ENCODE measurements at regions of chr2 and their contacts with region 1.

Region 1: DNA sequence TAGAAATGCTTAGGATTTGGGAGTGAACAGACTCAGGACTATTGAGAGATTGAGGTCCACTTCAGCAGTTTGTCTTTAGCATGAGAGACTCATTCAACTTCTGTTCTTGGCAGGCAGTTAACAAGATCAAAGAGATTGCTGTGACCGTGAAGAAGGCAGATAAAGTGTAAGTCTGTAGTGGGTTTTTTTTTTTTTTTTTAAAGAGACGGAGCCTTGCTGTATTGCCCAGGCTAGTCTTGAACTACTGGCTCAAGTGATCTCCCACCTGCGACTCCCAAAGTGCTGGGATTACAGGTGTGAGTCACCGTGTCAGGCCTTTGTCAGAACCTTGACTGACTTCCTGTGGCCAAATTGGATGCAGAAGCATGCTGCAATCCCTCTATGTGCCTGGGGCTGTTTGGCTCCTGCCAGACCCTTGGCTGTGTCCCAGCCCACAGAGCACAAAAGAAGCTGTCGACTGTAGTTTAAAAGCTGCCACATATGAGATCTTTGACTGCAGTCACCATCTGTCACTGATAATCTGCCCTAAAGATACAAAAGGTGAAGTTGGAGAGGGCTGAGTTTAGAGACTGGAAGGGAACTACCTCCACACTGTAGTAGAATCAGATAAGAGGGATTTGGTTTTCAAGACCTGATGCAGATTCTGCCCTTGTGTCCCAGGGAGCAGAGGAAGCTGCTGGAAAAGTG is 9.9 kb downstream of the CCT7 start:
- DNase-seq: peak; percentile 81
- H3K4me3 ChIP-seq: no peak overlapping the region
- CTCF ChIP-seq: no peak

Region 2: DNA sequence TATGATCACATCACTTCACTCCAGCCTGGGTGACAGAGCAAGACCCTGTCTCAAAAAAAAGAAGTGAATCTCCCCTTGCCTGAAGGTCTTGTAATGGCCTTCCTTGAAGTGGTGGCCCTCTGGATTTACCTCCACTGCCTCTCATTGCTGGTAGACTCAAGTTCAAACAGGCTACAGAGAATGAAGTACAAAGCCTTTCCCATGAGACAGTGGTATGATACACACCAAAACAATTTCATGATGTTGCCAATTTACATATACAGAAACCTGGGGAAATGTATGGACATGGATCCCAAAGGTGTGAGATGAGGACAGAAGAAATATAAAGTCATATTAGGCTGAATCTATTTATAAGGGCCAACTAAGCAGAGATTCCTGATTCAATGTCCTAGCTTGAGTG is 46.4 kb before region 1 on chr2:
- in situ Hi-C with region 1: no loop called
- DNase-seq: no peak
- H3K4me3 ChIP-seq: no peak overlapping the region
- CTCF ChIP-seq: no peak

Region 3: GRCh38 chr2:73293534-73294171 is 49.6 kb after region 1 on chr2 and contains the start of gene EGR4:
- in situ Hi-C with region 1: loop called (anchors 5 kb)
- DNase-seq: no peak
- H3K4me3 ChIP-seq: peak within 1 kb of the TSS; percentile 36
- CTCF ChIP-seq: no peak